T-cell (primary cell): ENCODE measurements at regions of chr2 and their contacts with region 1.

Region 1: DNA sequence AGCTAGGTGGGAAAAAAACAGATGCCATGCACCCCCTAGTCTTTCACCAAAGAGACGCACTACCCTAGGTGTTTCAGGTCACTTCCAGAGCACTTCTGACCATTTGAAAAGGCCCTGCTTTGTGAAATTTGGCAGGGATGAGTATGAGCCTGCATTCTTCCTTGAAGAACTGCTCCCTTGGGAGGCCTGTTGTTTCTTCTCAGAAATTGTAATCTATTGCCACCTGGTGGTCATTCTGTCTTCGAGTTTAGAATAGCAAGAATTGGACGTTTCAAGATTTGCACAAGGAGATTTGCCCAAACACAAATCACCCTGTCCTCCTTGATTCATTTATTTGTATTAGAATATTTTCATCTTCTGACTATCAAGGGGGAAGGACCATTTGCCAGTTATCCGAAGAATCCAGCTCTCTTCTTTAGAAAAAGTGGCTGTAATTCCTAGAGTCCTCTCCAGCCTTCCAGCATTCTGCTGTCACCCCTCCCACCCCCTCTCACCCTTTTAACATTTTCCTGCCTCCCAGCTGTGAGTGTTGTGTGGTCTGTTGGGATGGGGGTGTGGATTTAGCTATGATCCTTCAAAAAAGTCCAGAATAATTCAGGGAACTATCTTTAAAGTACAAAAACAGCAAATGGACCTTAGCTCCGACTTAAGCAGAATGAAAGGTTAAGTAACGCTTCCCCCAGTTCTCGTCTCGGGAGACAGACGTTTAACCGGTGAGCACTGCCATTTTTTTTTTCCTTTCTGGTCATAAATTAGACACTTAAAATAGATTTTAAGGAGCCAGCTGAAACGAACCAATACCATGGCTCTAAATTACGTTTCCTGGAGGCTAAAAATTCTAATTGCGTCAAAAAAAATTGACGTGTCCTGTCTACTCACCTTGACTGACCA is 3.7 kb upstream of the GAD1 start:
- DNase-seq: peak in 2 of 35 experiments; percentile 27 to 73
- ATAC-seq: no peak
- H3K4me3 ChIP-seq: peak overlapping the region in 1 of 2 donors; percentile 17
- H3K4me3 Mint-ChIP-seq: no peak overlapping the region
- H3K27ac ChIP-seq: no peak overlapping the region
- H3K27ac Mint-ChIP-seq: no peak overlapping the region
- H3K4me1 ChIP-seq: peaks cover 9 to 43% of the 10 kb centered on the region in 2 experiments
- H3K4me1 Mint-ChIP-seq: peaks cover 38 to 43% (median 40%) of the 10 kb centered on the region in 3 donors
- H3K27me3 ChIP-seq: peaks cover 8 to 56% of the 10 kb centered on the region in 2 experiments
- H3K27me3 Mint-ChIP-seq: peaks cover 52 to 70% of the 10 kb centered on the region in 2 donors

Region 2: DNA sequence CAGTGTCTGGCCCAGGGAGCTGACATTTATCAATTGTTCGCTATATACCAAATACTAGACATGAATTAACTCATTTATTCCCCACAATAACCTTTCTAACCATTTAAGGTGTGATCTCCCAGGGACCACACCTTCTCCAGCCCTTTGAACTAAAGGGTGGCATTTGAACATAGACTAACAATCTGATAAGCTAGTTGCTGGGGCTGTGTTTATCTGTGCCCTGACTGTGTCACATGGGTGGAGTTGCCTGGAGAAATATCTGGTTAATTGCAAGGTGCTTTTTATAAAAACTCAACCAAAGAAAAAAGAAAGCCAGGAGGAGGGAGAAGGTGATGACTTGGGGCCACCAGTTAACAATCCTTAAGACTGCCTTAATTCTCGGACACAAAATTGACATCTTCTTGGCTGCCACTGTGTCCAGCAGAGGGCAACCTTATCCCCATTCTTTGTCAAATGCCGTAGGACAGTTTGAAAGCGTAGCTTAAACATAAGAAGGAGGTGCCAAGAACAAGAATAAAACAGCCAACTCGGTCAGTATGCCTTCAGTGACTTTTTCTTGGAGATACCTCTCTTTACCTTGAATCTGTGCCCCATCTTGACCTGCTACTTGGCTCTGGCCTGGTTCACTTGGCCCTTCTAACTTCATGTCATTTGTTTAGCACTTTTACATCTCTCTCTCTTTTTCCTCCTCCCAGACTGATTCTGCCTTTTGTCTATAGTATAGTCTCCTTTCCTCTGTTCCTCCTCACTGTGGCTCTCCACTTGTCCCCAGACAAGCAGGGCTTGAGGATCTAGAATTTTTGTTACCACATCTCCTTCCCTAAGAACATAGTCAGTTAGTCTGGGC is 451.6 kb before region 1 on chr2:
- CTCF ChIA-PET with region 1: interaction called, 5 to 13 read pairs
- POLR2A ChIA-PET with region 1: no interaction called
- DNase-seq: peak in 34 of 35 experiments; percentile 4 to 73 (median 30)
- ATAC-seq: peak; percentile 58 to 80 (median 70)
- H3K4me3 ChIP-seq: no peak overlapping the region
- H3K4me3 Mint-ChIP-seq: no peak overlapping the region
- H3K27ac ChIP-seq: no peak overlapping the region
- H3K27ac Mint-ChIP-seq: no peak overlapping the region
- H3K4me1 ChIP-seq: peaks cover 5 to 13% of the 10 kb centered on the region in 2 experiments
- H3K4me1 Mint-ChIP-seq: peaks cover 0 to 10% (median 4%) of the 10 kb centered on the region in 3 donors
- H3K27me3 ChIP-seq: no peaks in the 10 kb centered on the region
- H3K27me3 Mint-ChIP-seq: peaks cover 10 to 22% of the 10 kb centered on the region in 2 donors

Region 3: GRCh38 chr2:170409164-170409535 is 403.8 kb before region 1 on chr2:
- CTCF ChIA-PET with region 1: interaction called, 13 read pairs
- POLR2A ChIA-PET with region 1: no interaction called
- DNase-seq: peak; percentile 30 to 85 (median 62)
- ATAC-seq: peak; percentile 53 to 78 (median 60)
- H3K4me3 ChIP-seq: peak overlapping the region in 1 of 2 donors; percentile 11
- H3K4me3 Mint-ChIP-seq: peak overlapping the region; percentile 40 to 58 (median 52)
- H3K27ac ChIP-seq: no peak overlapping the region
- H3K27ac Mint-ChIP-seq: no peak overlapping the region
- H3K4me1 ChIP-seq: peaks cover 0 to 6% of the 10 kb centered on the region in 2 experiments
- H3K4me1 Mint-ChIP-seq: peaks cover 11 to 15% (median 15%) of the 10 kb centered on the region in 3 donors
- H3K27me3 ChIP-seq: peaks cover 0 to 7% of the 10 kb centered on the region in 2 experiments
- H3K27me3 Mint-ChIP-seq: peaks cover 26 to 32% of the 10 kb centered on the region in 2 donors

Region 4: GRCh38 chr2:170940066-170940465 is 127.1 kb after region 1 on chr2:
- CTCF ChIA-PET with region 1: no interaction called
- POLR2A ChIA-PET with region 1: no interaction called
- DNase-seq: no peak
- ATAC-seq: peak in 1 of 4 experiments; percentile 37
- H3K4me3 ChIP-seq: no peak overlapping the region
- H3K4me3 Mint-ChIP-seq: peak overlapping the region in 1 of 3 donors; percentile 19
- H3K27ac ChIP-seq: no peak overlapping the region
- H3K27ac Mint-ChIP-seq: peak overlapping the region in 1 of 2 donors; percentile 8
- H3K4me1 ChIP-seq: peaks cover 12 to 21% of the 10 kb centered on the region in 2 experiments
- H3K4me1 Mint-ChIP-seq: peaks cover 68 to 85% (median 81%) of the 10 kb centered on the region in 3 donors
- H3K27me3 ChIP-seq: no peaks in the 10 kb centered on the region
- H3K27me3 Mint-ChIP-seq: no peaks in the 10 kb centered on the region